T-cell (primary cell): ENCODE measurements at regions of chr18 and their contacts with region 1.

Region 1: DNA sequence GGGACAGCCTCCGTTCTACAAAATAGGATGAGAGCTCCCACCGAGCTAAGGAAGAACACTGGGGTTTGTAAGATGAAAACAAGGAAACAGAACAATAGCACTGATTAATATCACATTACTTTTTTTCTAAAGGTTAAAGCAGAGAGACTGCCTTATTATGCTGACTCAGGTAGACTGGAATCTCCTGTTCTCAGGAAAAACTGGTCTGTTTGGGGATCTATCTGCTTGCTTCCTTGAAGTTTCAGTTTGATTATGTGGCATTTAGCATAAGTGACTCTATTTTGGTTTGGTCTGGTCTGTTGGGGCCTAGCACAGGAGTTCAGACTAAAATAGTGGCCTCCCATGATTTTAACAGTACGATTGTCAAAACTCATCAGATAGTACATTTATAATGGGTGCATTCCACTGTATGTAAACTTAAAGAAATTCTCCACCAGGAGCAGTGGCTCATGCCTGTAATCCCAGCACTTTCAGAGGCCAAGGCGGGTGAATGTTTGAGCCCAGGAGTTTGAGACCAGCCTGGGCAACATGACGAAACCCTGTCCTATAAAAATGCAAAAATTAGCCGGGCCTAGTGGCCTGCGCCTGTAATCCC is 64.1 kb upstream of the NDUFV2 start:
- DNase-seq: no peak
- ATAC-seq: no peak
- H3K4me3 ChIP-seq: no peak overlapping the region
- H3K4me3 Mint-ChIP-seq: no peak overlapping the region
- H3K27ac ChIP-seq: no peak overlapping the region
- H3K27ac Mint-ChIP-seq: no peak overlapping the region
- H3K4me1 ChIP-seq: no peaks in the 10 kb centered on the region
- H3K4me1 Mint-ChIP-seq: no peaks in the 10 kb centered on the region
- H3K27me3 ChIP-seq: no peaks in the 10 kb centered on the region
- H3K27me3 Mint-ChIP-seq: no peaks in the 10 kb centered on the region

Region 2: GRCh38 chr18:9260388-9261380 is 222.3 kb after region 1 on chr18:
- CTCF ChIA-PET with region 1: no interaction called
- POLR2A ChIA-PET with region 1: no interaction called
- DNase-seq: no peak
- ATAC-seq: peak in 1 of 4 experiments; percentile 13
- H3K4me3 ChIP-seq: no peak overlapping the region
- H3K4me3 Mint-ChIP-seq: no peak overlapping the region
- H3K27ac ChIP-seq: no peak overlapping the region
- H3K27ac Mint-ChIP-seq: peak overlapping the region; percentile 12 to 63
- H3K4me1 ChIP-seq: no peaks in the 10 kb centered on the region
- H3K4me1 Mint-ChIP-seq: peaks cover 8 to 14% (median 10%) of the 10 kb centered on the region in 3 donors
- H3K27me3 ChIP-seq: no peaks in the 10 kb centered on the region
- H3K27me3 Mint-ChIP-seq: no peaks in the 10 kb centered on the region

Region 3: DNA sequence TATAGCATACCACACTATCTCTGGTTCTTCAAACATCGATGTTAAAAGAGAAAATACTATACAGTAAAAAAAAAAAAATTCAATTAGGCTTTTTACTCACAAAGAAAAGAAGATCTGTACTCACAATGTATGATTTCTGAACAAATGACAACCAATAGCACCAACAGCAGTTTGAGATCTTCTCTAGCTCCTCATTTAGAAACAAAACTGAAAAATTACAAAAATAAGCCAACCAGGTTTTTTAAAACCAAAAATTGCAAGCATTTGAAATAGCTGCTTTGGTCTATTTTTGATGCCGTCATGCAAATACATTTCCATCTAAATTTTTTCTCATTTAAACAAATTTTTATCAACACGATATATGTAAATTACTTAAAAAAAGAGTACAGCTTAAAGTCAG is 402.7 kb after region 1 on chr18:
- CTCF ChIA-PET with region 1: interaction called in 1 of 2 experiments, 10 read pairs
- POLR2A ChIA-PET with region 1: no interaction called
- DNase-seq: no peak
- ATAC-seq: no peak
- H3K4me3 ChIP-seq: no peak overlapping the region
- H3K4me3 Mint-ChIP-seq: no peak overlapping the region
- H3K27ac ChIP-seq: no peak overlapping the region
- H3K27ac Mint-ChIP-seq: no peak overlapping the region
- H3K4me1 ChIP-seq: no peaks in the 10 kb centered on the region
- H3K4me1 Mint-ChIP-seq: no peaks in the 10 kb centered on the region
- H3K27me3 ChIP-seq: peaks cover 0 to 2% of the 10 kb centered on the region in 2 experiments
- H3K27me3 Mint-ChIP-seq: peaks cover 4 to 7% of the 10 kb centered on the region in 2 donors

Region 4: GRCh38 chr18:10397004-10397403 is 1358.6 kb after region 1 on chr18:
- CTCF ChIA-PET with region 1: no interaction called
- POLR2A ChIA-PET with region 1: interaction called in 1 of 2 experiments, 16 read pairs
- DNase-seq: no peak
- ATAC-seq: no peak
- H3K4me3 ChIP-seq: no peak overlapping the region
- H3K4me3 Mint-ChIP-seq: no peak overlapping the region
- H3K27ac ChIP-seq: no peak overlapping the region
- H3K27ac Mint-ChIP-seq: no peak overlapping the region
- H3K4me1 ChIP-seq: no peaks in the 10 kb centered on the region
- H3K4me1 Mint-ChIP-seq: no peaks in the 10 kb centered on the region
- H3K27me3 ChIP-seq: peaks cover 0 to 2% of the 10 kb centered on the region in 2 experiments
- H3K27me3 Mint-ChIP-seq: peaks cover 5 to 11% of the 10 kb centered on the region in 2 donors